ENCODE measurements at regions of chr19 and their contacts with region 1.

Region 1: DNA sequence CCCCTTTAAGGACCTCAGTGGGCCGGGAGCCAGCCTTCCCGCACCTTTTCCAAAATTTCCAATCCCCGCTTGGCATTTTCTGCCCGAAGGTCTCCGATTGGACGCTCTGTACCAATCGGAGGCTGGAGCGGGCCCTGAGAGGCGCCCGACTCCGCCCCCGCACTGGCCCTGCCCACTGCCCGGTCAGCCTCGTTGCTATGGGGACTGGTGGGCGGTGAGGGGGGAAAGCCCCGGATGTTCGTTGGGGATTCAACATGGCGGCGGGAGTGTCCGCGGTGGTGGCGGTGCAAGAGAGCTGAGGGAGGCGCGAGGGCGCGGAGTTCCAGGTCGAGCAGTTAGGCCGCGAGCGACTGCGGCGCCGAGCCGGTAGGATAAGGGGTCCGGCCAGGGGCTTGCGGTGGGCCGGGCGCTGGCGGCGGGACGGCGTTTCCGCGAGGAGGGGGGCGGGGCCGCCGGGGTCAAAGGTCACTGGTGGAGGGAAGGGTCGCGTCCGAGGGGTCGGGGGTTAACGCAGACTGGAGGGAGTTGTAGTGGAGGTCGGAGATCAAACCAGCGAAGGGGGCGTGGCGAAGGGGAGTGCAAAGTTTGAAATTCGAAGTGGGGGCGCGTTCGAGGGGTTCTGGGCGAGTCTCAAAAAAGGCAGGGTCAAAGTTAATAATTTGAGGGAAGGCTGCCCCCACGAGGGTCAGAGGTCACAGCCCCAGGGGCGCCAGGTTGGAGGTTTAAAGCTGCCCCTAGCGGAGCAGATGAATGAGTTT is at the start of gene PAK4:
- H3K4me3 ChIP-seq: peak within 1 kb of the TSS; percentile 67
- H3K27ac ChIP-seq: peak within 1 kb of the TSS; percentile 88
- H3K4me1 ChIP-seq: peaks cover 24% of the 10 kb centered on the region
- CTCF ChIP-seq: peak; percentile 91

Region 2: DNA sequence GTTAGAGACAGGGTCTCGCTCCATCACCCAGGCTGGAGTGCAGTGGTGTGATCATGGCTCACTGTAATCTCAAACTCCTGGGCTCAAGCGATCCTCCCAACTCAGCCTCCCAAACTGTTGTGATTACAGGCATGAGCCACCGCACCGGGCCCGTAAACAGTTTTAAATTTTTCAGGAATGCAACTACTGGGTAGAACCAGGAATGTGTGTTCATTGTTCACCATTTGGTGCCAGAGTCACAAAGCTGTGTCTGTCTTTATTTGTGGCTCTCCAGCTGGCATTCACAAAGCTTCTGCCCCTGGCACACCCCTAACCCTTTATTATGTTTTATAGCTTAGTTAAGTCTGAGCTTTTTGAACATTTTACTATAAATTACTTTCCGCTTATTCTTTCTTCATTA is 61.3 kb before region 1 on chr19:
- CTCF ChIA-PET with region 1: no interaction called
- POLR2A ChIA-PET with region 1: no interaction called
- H3K4me3 ChIP-seq: no peak overlapping the region
- H3K27ac ChIP-seq: no peak overlapping the region
- H3K4me1 ChIP-seq: no peaks in the 10 kb centered on the region
- CTCF ChIP-seq: no peak

Region 3: GRCh38 chr19:39187559-39187957 is 61.8 kb after region 1 on chr19:
- CTCF ChIA-PET with region 1: interaction called, 39 read pairs
- POLR2A ChIA-PET with region 1: interaction called, 3 read pairs
- H3K4me3 ChIP-seq: no peak overlapping the region
- H3K27ac ChIP-seq: 0 out of 2 replicates have a peak overlapping the region, but pooled peaks have one; percentile 24
- H3K4me1 ChIP-seq: 0 out of 2 replicates have a peak, but pooled peaks cover 4% of the 10 kb centered on the region
- CTCF ChIP-seq: no peak

Region 4: DNA sequence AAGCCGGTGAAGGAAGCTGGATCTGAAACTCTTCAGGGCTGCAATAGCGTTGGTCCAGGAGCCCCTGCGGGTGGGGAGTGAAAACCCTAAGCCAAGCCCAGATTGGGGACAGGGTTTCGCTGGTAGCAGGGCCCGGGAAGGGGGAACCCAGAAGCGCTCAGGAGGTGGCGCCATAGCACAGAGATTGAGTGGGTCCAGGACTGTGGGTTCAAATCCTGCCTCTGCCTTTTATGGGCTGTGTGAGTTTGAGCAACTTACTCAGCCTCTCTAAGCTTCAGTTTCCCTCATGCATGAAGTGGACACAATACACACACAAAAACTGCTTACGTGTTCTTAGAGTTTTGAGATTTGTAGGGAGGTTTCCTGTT is 86.6 kb after region 1 on chr19:
- CTCF ChIA-PET with region 1: interaction called, 19 read pairs
- POLR2A ChIA-PET with region 1: no interaction called
- H3K4me3 ChIP-seq: no peak overlapping the region
- H3K27ac ChIP-seq: no peak overlapping the region
- H3K4me1 ChIP-seq: no peaks in the 10 kb centered on the region
- CTCF ChIP-seq: peak; percentile 76

Region 5: DNA sequence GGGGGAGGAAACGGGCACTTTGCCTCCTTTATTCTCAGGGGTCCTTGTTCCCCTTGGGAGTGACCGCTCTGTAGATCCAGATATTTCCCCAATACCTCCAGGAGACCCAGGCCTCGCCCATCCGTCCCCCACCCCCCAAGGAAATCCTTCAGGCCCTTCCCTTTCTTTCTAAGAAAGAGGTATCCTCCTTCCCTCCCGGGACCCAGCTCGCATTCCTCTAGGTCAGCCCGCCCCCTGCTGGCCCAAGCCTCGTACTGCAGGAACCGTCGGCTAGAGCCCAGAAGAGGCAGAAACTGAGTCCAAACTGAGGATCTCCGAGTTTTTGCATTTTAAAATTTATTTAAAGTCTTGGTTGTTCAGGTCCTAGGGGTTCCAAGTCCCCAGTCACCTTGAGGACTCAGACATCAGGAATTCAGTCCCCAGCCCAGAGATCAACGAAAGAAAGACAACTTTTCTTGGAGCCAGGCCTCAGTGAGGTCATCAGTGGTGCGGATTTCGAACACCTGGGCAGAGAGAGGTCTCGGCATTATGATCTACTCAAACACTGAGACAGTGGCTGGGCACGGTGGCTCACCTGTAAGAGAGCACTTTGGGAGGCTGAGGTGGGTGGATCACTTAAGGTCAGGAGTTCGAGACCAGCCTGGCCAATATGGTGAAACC is 202.4 kb after region 1 on chr19:
- CTCF ChIA-PET with region 1: interaction called, 165 read pairs
- POLR2A ChIA-PET with region 1: interaction called, 3 read pairs
- H3K4me3 ChIP-seq: no peak overlapping the region
- H3K27ac ChIP-seq: no peak overlapping the region
- H3K4me1 ChIP-seq: no peaks in the 10 kb centered on the region; the same call in 1 of the 2 replicates
- CTCF ChIP-seq: peak; percentile 95

Measured in HEK293 (cell line).